ENCODE measurements at regions of chr16 and their contacts with region 1.

Region 1: GRCh38 chr16:49855280-49855821 is 561 bp downstream of the ZNF423 start:
- DNase-seq: peak; percentile 88
- ATAC-seq: peak; percentile 35
- H3K4me3 Mint-ChIP-seq: peak overlapping the region; percentile 56
- H3K27ac Mint-ChIP-seq: no peak overlapping the region
- H3K4me1 Mint-ChIP-seq: peaks cover 46% of the 10 kb centered on the region
- H3K27me3 Mint-ChIP-seq: peaks cover 18% of the 10 kb centered on the region
- CTCF ChIP-seq: no peak

Region 2: DNA sequence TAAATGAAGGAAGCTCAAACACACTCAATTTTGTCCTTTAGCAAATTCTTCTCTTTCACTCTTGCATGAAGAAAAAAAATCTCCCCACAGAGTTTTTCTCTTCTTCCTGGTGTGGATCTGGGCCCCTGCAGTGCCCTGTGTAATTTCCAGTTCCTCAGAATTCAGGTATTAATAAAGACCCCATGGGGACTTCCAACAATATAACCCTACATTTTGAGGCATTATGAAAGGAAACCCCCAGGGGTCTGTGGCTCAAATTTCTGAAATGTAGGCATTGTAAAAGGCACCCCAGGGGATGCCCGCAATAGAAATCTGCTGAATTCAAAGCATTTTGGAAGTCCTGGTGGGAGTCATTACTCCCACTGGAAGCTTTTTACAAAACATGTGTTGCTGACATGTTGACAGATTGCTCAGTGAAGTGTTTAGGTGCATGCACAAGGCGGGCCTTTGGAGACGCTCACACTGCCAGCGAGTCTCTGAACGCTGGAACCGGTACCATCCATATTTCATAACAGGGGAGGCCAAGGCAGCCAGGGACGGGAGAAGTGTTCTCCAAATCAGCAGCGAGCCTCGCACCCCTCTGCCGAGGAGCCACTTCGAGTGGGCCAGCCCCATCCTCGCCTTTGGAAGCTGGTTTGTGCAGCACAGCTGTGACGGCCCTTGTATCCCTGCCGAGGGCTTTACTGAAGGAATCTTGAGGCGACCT is 153.4 kb before region 1 on chr16:
- CTCF ChIA-PET with region 1: interaction called, 10 read pairs
- POLR2A ChIA-PET with region 1: no interaction called
- DNase-seq: peak; percentile 77
- ATAC-seq: peak; percentile 51
- H3K4me3 Mint-ChIP-seq: peak overlapping the region; percentile 59
- H3K27ac Mint-ChIP-seq: peak overlapping the region; percentile 96
- H3K4me1 Mint-ChIP-seq: peaks cover 79% of the 10 kb centered on the region
- H3K27me3 Mint-ChIP-seq: no peaks in the 10 kb centered on the region
- CTCF ChIP-seq: no peak

Region 3: GRCh38 chr16:49834531-49835151 is 20.7 kb before region 1 on chr16:
- CTCF ChIA-PET with region 1: interaction called, 18 read pairs
- POLR2A ChIA-PET with region 1: no interaction called
- DNase-seq: peak; percentile 63
- ATAC-seq: peak; percentile 27
- H3K4me3 Mint-ChIP-seq: no peak overlapping the region
- H3K27ac Mint-ChIP-seq: no peak overlapping the region
- H3K4me1 Mint-ChIP-seq: peaks cover 68% of the 10 kb centered on the region
- H3K27me3 Mint-ChIP-seq: no peaks in the 10 kb centered on the region; the same call in 1 of the 2 replicates
- CTCF ChIP-seq: no peak

Region 4: GRCh38 chr16:49876716-49877129 is 21.4 kb after region 1 on chr16:
- CTCF ChIA-PET with region 1: interaction called, 199 read pairs
- POLR2A ChIA-PET with region 1: interaction called, 3 read pairs
- DNase-seq: peak; percentile 88
- ATAC-seq: peak; percentile 89
- H3K4me3 Mint-ChIP-seq: peak overlapping the region; percentile 76
- H3K27ac Mint-ChIP-seq: no peak overlapping the region
- H3K4me1 Mint-ChIP-seq: peaks cover 4% of the 10 kb centered on the region
- H3K27me3 Mint-ChIP-seq: peaks cover 9% of the 10 kb centered on the region
- CTCF ChIP-seq: peak; percentile 95

Region 5: DNA sequence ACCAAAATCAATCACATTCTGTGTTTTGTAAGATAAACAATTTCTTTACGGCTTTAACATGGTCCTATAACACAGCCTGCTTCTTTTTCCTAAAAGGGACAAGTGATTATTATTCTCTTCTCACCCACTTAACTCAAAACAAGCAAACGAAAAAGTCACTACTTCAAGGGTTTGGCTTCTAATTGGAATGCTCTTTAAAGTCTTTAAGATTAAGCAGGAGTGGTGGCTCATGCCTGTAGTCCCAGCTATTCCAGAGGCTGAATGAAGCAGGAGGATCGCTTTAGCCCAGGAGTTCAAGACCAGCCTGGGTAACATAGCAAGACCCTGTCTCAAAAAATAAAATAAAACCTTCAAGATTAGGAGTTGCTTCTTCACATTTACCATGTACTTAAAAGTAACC is 103.1 kb after region 1 on chr16:
- CTCF ChIA-PET with region 1: interaction called, 11 read pairs
- POLR2A ChIA-PET with region 1: no interaction called
- DNase-seq: no peak
- ATAC-seq: no peak
- H3K4me3 Mint-ChIP-seq: no peak overlapping the region
- H3K27ac Mint-ChIP-seq: no peak overlapping the region
- H3K4me1 Mint-ChIP-seq: no peaks in the 10 kb centered on the region; the same call in 1 of the 2 replicates
- H3K27me3 Mint-ChIP-seq: no peaks in the 10 kb centered on the region
- CTCF ChIP-seq: no peak

Region 6: GRCh38 chr16:49969091-49970030 is 114.0 kb after region 1 on chr16:
- CTCF ChIA-PET with region 1: no interaction called
- POLR2A ChIA-PET with region 1: no interaction called
- DNase-seq: no peak
- ATAC-seq: peak; percentile 28; the same call in 1 of the 2 replicates
- H3K4me3 Mint-ChIP-seq: no peak overlapping the region
- H3K27ac Mint-ChIP-seq: no peak overlapping the region
- H3K4me1 Mint-ChIP-seq: peaks cover 8% of the 10 kb centered on the region
- H3K27me3 Mint-ChIP-seq: no peaks in the 10 kb centered on the region
- CTCF ChIP-seq: no peak

Region 7: GRCh38 chr16:49980166-49980565 is 124.8 kb after region 1 on chr16:
- CTCF ChIA-PET with region 1: no interaction called
- POLR2A ChIA-PET with region 1: no interaction called
- DNase-seq: no peak
- ATAC-seq: no peak
- H3K4me3 Mint-ChIP-seq: no peak overlapping the region
- H3K27ac Mint-ChIP-seq: no peak overlapping the region
- H3K4me1 Mint-ChIP-seq: no peaks in the 10 kb centered on the region
- H3K27me3 Mint-ChIP-seq: no peaks in the 10 kb centered on the region; the same call in 1 of the 2 replicates
- CTCF ChIP-seq: no peak

Measured in WTC11 (cell line).